CD14-positive monocyte (primary cell): ENCODE measurements at regions of chr12 and their contacts with region 1.

Region 1: GRCh38 chr12:25337916-25338315 is 87.2 kb upstream of the KRAS start:
- DNase-seq: no peak
- H3K4me3 ChIP-seq: no peak overlapping the region
- H3K4me3 Mint-ChIP-seq: no peak overlapping the region
- H3K27ac ChIP-seq: no peak overlapping the region
- H3K27ac Mint-ChIP-seq: no peak overlapping the region
- H3K4me1 ChIP-seq: peaks cover 8 to 16% of the 10 kb centered on the region in 2 donors
- H3K4me1 Mint-ChIP-seq: peaks cover 7% of the 10 kb centered on the region
- H3K27me3 ChIP-seq: no peaks in the 10 kb centered on the region
- H3K27me3 Mint-ChIP-seq: peaks cover 0 to 2% (median 0%) of the 10 kb centered on the region in 3 donors
- CTCF ChIP-seq: no peak

Region 2: DNA sequence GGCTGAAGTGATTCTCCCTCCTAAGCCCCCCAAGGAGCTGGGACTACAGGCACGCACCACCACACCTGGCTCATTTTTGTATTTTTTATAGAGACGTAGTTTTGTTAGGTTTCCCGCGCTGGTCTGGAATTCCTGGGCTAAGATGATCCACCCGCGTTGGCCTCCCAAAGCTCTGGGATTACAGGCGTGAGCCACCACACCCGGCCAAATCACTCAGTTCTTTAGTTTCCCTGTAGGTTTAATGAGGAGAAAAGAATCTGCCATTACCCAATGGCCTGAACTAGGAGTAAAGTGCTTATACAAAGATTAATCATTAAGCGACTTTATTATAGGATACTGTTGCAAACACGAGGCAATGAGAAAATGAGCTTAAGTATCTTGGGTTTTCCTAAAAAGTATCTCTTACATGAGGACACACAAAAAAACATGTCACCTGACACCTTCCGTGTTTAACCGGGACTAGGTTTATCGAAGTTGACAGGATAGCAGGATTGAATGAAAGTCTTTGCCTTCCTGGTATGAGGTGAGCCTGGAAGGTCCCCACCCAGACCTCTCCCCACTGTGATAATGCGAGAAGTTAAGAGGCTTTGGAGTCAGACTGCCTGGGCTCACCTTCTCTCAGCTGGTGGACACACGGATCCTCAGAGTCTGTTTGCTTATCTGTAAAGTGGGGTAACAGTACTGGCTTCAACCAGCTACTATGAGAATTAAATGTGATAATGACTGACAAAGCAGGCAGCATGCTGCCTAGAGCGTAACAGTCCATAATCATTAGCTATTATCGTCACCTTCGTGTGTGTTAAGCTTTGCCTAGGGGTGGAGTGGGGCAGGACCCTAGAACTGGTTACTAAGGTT is 46.3 kb after region 1 on chr12:
- intact Hi-C with region 1: loop called in 1 of 2 experiments (anchors 5 kb)
- DNase-seq: no peak
- H3K4me3 ChIP-seq: no peak overlapping the region
- H3K4me3 Mint-ChIP-seq: peak overlapping the region in 1 of 2 donors; percentile 97
- H3K27ac ChIP-seq: peak overlapping the region in 1 of 2 donors; percentile 99
- H3K27ac Mint-ChIP-seq: peak overlapping the region; percentile 99 to 100 (median 100)
- H3K4me1 ChIP-seq: peaks cover 20 to 25% of the 10 kb centered on the region in 2 donors
- H3K4me1 Mint-ChIP-seq: peaks cover 31% of the 10 kb centered on the region
- H3K27me3 ChIP-seq: no peaks in the 10 kb centered on the region
- H3K27me3 Mint-ChIP-seq: peaks cover 0 to 5% (median 0%) of the 10 kb centered on the region in 3 donors
- CTCF ChIP-seq: no peak

Region 3: DNA sequence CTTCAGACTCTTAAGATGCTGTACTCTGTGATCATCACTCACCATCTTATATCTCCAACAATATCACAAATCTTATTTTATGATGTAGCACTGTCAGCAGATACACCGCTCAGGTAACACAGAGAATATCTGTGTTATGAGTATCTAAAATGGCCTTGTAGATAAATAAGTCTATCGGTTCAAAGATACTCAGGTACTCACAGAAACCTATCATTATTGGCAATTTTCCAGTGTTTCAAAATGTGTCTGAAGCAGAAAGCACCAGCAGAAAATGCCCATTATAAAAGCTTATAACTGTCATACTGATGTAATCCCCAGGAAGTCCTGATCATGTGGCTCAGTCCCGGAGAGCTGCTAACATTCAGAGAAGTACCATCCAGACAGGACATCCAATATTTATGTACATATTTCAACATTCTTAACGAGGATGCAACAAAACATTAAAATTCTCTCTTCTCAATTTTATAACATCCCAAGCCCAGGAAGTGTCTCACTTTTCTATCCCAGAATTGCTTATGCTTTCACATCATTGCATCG is 405.8 kb after region 1 on chr12:
- intact Hi-C with region 1: no loop called
- DNase-seq: no peak
- H3K4me3 ChIP-seq: no peak overlapping the region
- H3K4me3 Mint-ChIP-seq: no peak overlapping the region
- H3K27ac ChIP-seq: no peak overlapping the region
- H3K27ac Mint-ChIP-seq: no peak overlapping the region
- H3K4me1 ChIP-seq: no peaks in the 10 kb centered on the region
- H3K4me1 Mint-ChIP-seq: no peaks in the 10 kb centered on the region
- H3K27me3 ChIP-seq: no peaks in the 10 kb centered on the region
- H3K27me3 Mint-ChIP-seq: peaks cover 0 to under 1% (median 0%) of the 10 kb centered on the region in 3 donors
- CTCF ChIP-seq: no peak